ENCODE measurements at regions of chr12 and their contacts with region 1.

Region 1: DNA sequence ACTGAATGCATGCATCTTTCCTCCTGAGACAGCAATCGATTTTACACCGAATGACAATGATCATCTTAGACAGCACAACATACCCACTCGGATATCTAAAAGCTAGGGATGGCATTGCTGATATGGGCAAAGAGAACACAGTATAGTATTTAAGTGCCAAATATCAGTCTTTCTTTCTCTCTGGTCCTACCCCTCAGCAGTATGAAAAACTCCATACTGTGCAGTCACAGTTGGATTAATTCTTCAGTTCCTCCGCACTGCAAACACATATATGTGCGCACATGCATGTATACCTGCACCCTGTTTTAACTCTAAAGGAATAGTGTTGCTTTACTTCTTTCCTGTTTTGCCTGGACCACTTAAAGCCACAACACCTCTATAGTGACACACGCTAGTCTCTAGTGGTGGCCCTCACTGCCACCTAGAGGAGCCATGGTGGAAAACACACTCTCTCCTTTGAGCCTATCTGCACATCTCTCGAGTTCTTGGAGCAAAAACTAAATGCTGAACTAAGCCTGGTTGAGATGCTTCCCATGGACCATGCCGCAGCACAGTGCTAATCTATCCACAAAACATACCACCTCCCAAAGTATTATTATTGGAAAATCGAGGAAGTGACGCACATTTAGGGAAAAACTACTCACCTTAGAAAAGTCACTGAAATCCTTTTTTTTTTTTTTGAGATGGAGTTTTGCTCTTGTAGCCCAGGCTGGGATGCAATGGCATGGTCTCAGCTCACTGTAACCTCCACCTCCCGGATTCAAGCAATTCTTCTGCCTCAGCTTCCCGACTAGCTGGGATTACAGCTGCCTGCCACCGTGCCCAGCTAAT is 11.9 kb downstream of the TMEM52B start:
- DNase-seq: peak; percentile 59 to 67
- H3K4me3 ChIP-seq: no peak overlapping the region
- H3K27ac ChIP-seq: peak overlapping the region; percentile 79
- H3K4me1 ChIP-seq: peaks cover 40% of the 10 kb centered on the region
- H3K27me3 ChIP-seq: no peaks in the 10 kb centered on the region
- CTCF ChIP-seq: peak; percentile 74

Region 2: DNA sequence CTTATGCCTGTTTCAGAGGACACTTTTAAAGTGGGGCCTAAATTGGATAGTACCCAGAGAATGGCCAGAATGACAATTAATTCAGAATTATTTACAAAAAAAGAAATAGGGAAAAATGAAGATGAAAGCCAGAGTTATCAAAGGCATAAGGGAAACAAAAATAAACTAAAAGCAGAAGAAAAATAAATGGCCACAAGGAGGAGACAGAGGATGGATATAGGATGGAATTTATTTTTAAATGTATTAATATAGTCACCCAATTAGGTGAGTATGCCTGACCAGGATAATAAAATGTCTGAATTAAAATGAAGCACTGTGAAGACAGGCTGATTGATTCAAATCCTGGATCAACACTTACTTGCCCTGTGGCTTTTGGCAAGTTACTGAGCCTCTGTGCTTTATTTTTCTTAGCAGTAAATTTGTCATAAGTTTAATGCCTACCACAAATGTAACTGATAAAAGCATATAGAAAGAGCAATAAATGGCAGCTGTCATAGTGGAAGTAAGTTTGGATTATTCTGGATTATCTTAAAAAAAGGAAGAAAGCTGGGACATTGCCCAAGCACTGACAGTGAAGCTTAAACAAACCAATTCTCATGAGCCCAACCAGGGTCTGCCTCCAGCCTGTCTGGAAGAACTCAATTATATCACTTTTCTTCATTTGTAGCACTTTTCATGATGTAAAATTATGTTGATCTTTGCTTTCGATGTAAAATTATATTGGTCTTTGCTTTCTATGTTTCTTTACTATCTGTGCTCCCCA is 156.8 kb before region 1 on chr12:
- CTCF ChIA-PET with region 1: no interaction called
- POLR2A ChIA-PET with region 1: no interaction called
- intact Hi-C with region 1: no loop called
- DNase-seq: no peak
- H3K4me3 ChIP-seq: no peak overlapping the region
- H3K27ac ChIP-seq: no peak overlapping the region
- H3K4me1 ChIP-seq: no peaks in the 10 kb centered on the region
- H3K27me3 ChIP-seq: no peaks in the 10 kb centered on the region
- CTCF ChIP-seq: peak; percentile 80

Region 3: GRCh38 chr12:10101042-10101579 is 89.7 kb before region 1 on chr12:
- CTCF ChIA-PET with region 1: interaction called, 14 read pairs
- POLR2A ChIA-PET with region 1: no interaction called
- intact Hi-C with region 1: no loop called
- DNase-seq: peak in 1 of 2 experiments; percentile 42
- H3K4me3 ChIP-seq: no peak overlapping the region
- H3K27ac ChIP-seq: no peak overlapping the region
- H3K4me1 ChIP-seq: no peaks in the 10 kb centered on the region
- H3K27me3 ChIP-seq: no peaks in the 10 kb centered on the region
- CTCF ChIP-seq: no peak

Region 4: GRCh38 chr12:10167588-10167987 is 23.2 kb before region 1 on chr12:
- CTCF ChIA-PET with region 1: interaction called, 4 read pairs
- POLR2A ChIA-PET with region 1: interaction called, 11 read pairs
- intact Hi-C with region 1: loop called (anchors 2 kb)
- DNase-seq: no peak
- H3K4me3 ChIP-seq: no peak overlapping the region
- H3K27ac ChIP-seq: no peak overlapping the region
- H3K4me1 ChIP-seq: peaks cover 36% of the 10 kb centered on the region
- H3K27me3 ChIP-seq: no peaks in the 10 kb centered on the region
- CTCF ChIP-seq: no peak

Region 5: GRCh38 chr12:10205251-10205807 is 14.6 kb after region 1 on chr12:
- CTCF ChIA-PET with region 1: interaction called, 6 read pairs
- POLR2A ChIA-PET with region 1: interaction called, 3 read pairs
- intact Hi-C with region 1: loop called (anchors 1 kb)
- DNase-seq: peak; percentile 58 to 88
- H3K4me3 ChIP-seq: peak overlapping the region; percentile 3; the same call in 1 of the 2 replicates
- H3K27ac ChIP-seq: peak overlapping the region; percentile 73
- H3K4me1 ChIP-seq: peaks cover 22% of the 10 kb centered on the region
- H3K27me3 ChIP-seq: no peaks in the 10 kb centered on the region
- CTCF ChIP-seq: no peak

Region 6: DNA sequence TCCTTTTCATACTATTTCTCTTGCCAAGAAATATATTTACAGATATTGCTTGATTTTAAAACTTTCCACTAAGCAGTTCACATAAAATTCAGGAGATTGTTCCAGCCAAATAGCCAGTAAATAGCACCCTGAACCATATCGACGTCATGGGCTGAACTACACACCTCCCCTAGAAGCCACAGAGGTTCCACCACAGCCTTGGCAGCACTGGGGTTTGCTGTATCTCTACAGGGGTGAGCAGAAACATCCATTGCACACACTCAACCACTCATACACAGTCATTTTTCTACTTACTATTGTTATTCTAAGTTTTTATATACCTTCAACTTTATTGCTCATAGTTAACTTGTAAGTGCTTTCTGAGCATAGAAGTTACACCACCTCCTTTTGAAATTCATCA is 306.8 kb after region 1 on chr12:
- CTCF ChIA-PET with region 1: no interaction called
- POLR2A ChIA-PET with region 1: no interaction called
- intact Hi-C with region 1: no loop called
- DNase-seq: no peak
- H3K4me3 ChIP-seq: no peak overlapping the region
- H3K27ac ChIP-seq: no peak overlapping the region
- H3K4me1 ChIP-seq: no peaks in the 10 kb centered on the region
- H3K27me3 ChIP-seq: no peaks in the 10 kb centered on the region
- CTCF ChIP-seq: no peak